Activated CD8-positive, alpha-beta T cell treated with anti-CD3 and anti-CD28 coated beads, Interleukin-2, amount 10 ng/mL, durations not matched to agents 7 days and 5 days (primary cell): ENCODE measurements at regions of chr5 and their contacts with region 1.

Region 1: GRCh38 chr5:139293504-139294373 is at the start of gene MATR3:
- DNase-seq: peak; percentile 96
- ATAC-seq: peak; percentile 86
- H3K4me3 Mint-ChIP-seq: peak within 1 kb of the TSS; percentile 96
- H3K27ac Mint-ChIP-seq: peak within 1 kb of the TSS; percentile 98
- H3K4me1 Mint-ChIP-seq: peaks cover 41% of the 10 kb centered on the region
- H3K27me3 Mint-ChIP-seq: no peaks in the 10 kb centered on the region
- total RNA-seq, gene MATR3: 174 to 176 TPM

Region 2: GRCh38 chr5:138542956-138543729 is 750.6 kb before region 1 on chr5 and contains the start of gene ETF1:
- CTCF ChIA-PET with region 1: no interaction called
- POLR2A ChIA-PET with region 1: interaction called, 11 read pairs
- DNase-seq: peak; percentile 100
- ATAC-seq: peak; percentile 90
- H3K4me3 Mint-ChIP-seq: peak within 1 kb of the TSS; percentile 94
- H3K27ac Mint-ChIP-seq: peak within 1 kb of the TSS; percentile 100
- H3K4me1 Mint-ChIP-seq: peaks cover 62% of the 10 kb centered on the region
- H3K27me3 Mint-ChIP-seq: no peaks in the 10 kb centered on the region
- total RNA-seq, gene ETF1: 92.7 to 93.3 TPM

Region 3: DNA sequence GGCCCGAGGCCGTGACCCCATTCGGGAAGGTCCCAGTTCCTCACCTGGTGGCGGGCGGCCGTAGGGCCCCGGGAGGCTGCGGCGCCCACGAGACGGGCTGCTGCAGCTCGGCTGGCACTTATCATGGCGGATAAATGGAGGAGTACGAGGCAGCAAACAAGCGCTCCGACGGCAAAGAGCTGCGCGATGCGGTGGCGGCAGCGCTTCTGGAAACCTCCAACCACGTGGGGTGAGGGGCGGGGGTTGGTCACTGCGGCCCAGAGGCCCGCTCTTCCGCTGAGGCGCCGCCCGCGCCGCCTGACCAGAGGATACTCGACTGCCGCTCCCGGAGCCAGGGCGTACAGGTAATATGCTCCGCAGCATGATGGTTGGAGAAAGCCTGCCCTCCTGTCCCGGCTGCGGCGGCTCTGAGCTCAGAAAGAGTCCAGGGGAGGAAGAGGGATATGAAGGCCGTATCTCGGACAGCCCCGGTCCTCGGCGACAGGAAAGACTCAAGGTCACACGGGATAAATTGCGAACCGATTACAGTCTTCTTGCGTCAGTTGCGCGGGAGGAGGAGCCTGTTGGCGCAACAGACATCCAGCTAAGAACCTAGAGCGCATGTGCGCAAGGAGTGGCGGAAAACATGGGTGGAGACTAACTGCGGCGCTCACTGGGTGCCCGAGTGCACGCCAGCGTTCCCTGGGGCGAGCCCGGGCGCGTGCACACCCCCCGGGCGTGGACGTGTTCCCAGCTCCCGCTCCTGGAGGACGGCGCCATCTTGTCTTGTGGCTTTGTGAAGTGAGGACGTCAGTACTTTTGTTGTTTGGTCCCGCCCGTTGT is 718.3 kb before region 1 on chr5 and contains the start of gene HSPA9:
- CTCF ChIA-PET with region 1: no interaction called
- POLR2A ChIA-PET with region 1: interaction called, 13 read pairs
- DNase-seq: peak; percentile 98
- ATAC-seq: peak; percentile 87
- H3K4me3 Mint-ChIP-seq: peak within 1 kb of the TSS; percentile 92
- H3K27ac Mint-ChIP-seq: peak within 1 kb of the TSS; percentile 100
- H3K4me1 Mint-ChIP-seq: peaks cover 35% of the 10 kb centered on the region
- H3K27me3 Mint-ChIP-seq: no peaks in the 10 kb centered on the region
- total RNA-seq, gene HSPA9: 214 to 216 TPM

Region 4: DNA sequence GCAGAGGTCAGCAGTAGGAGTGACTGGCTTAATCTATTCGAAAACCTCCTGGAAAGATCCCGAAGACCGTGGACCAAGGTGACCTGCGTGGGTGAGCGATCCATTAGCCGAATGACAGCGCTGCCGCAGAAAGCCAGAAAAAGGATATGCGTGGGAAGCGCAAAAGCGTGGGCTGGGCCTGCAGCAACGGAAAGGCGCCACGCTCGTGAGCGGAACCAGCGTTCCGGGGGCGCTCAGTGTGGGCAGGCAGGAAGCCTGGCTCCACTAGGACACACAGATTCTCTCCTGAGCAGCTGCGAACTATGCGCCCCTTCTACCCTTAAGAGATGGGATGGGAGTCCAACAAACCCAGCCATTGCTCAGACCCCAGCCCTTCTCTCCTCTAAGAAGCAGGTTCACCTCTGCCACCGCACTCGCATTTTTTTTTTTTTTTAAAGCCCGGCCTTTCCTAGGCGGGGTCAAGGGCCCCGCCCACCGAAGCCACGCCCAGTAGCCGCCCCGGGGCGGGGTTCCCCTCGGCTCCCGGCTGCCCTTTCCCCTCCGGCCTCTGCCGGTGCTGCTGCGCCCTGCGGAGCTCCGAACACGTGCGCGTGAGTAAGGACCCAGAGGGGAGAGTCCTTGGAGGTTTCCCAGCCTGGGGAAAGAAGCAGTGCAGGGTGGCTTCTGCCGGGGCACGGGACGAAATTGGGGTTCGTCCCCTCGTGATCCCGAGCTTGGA is 20.0 kb before region 1 on chr5:
- CTCF ChIA-PET with region 1: interaction called, 6 read pairs
- POLR2A ChIA-PET with region 1: interaction called, 64 read pairs
- DNase-seq: peak; percentile 89
- ATAC-seq: peak; percentile 91
- H3K4me3 Mint-ChIP-seq: peak overlapping the region; percentile 90
- H3K27ac Mint-ChIP-seq: peak overlapping the region; percentile 73
- H3K4me1 Mint-ChIP-seq: peaks cover 59% of the 10 kb centered on the region
- H3K27me3 Mint-ChIP-seq: peaks cover 4% of the 10 kb centered on the region

Region 5: GRCh38 chr5:139282197-139282557 is 11.6 kb before region 1 on chr5:
- CTCF ChIA-PET with region 1: interaction called, 6 read pairs
- POLR2A ChIA-PET with region 1: interaction called, 16 read pairs
- DNase-seq: no peak
- ATAC-seq: no peak
- H3K4me3 Mint-ChIP-seq: no peak overlapping the region
- H3K27ac Mint-ChIP-seq: no peak overlapping the region
- H3K4me1 Mint-ChIP-seq: peaks cover 34% of the 10 kb centered on the region
- H3K27me3 Mint-ChIP-seq: no peaks in the 10 kb centered on the region

Region 6: GRCh38 chr5:139341650-139342422 is 48.1 kb after region 1 on chr5 and contains the start of gene PAIP2:
- CTCF ChIA-PET with region 1: interaction called, 11 read pairs
- POLR2A ChIA-PET with region 1: interaction called, 35 read pairs
- DNase-seq: peak; percentile 98
- ATAC-seq: peak; percentile 87
- H3K4me3 Mint-ChIP-seq: peak within 1 kb of the TSS; percentile 93
- H3K27ac Mint-ChIP-seq: peak within 1 kb of the TSS; percentile 98
- H3K4me1 Mint-ChIP-seq: peaks cover 43% of the 10 kb centered on the region
- H3K27me3 Mint-ChIP-seq: no peaks in the 10 kb centered on the region
- total RNA-seq, gene PAIP2: 90.7 to 93.5 TPM

Region 7: GRCh38 chr5:139392678-139393496 is 99.1 kb after region 1 on chr5:
- CTCF ChIA-PET with region 1: interaction called, 4 read pairs
- POLR2A ChIA-PET with region 1: interaction called, 37 read pairs
- DNase-seq: peak; percentile 93
- ATAC-seq: peak; percentile 73
- H3K4me3 Mint-ChIP-seq: peak overlapping the region; percentile 98
- H3K27ac Mint-ChIP-seq: peak overlapping the region; percentile 97
- H3K4me1 Mint-ChIP-seq: peaks cover 68% of the 10 kb centered on the region
- H3K27me3 Mint-ChIP-seq: no peaks in the 10 kb centered on the region